ENCODE measurements at regions of chr14 and their contacts with region 1.

Region 1: DNA sequence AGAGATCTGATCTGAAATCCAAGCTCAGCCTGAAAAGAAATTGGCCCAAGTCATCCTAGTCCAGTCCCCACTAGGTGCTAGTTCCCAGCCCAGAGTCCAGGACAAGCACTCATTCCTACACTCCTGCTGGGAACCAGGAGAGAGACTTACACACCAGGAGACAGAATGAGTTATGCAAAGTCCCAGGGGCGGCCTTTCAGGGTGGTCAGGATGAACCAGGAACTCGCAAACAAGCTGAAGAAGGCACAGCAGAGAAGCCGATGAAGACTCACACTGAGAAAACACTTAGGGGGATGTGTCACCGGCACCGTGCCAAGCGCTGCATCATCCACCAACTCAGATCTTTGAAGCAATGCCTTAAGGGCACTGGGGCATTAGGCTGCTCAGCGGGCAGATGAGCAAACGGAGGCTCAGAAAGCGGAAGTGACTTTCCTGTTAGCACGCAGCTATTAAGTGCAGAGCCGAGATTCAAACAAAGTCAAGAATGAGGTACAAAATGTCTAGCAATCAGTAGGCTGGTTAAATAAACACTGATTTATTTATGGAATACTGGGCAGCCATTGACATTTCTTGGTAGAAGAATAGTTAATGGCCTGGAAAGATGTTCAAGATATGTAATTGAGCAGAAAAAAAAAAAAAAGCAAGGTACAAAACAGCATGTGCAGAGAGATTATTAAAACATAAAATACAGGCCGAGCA is 78.7 kb downstream of the LRRC74A start:
- DNase-seq: peak; percentile 84
- ATAC-seq: peak; percentile 93
- H3K4me3 ChIP-seq: no peak overlapping the region
- H3K27ac ChIP-seq: peak overlapping the region; percentile 38
- H3K4me1 ChIP-seq: peaks cover 11% of the 10 kb centered on the region
- H3K27me3 ChIP-seq: no peaks in the 10 kb centered on the region
- CTCF ChIP-seq: no peak
- EP300 ChIP-seq: no peak
- POLR2A ChIP-seq: no peak
- RAD21 ChIP-seq: no peak

Region 2: DNA sequence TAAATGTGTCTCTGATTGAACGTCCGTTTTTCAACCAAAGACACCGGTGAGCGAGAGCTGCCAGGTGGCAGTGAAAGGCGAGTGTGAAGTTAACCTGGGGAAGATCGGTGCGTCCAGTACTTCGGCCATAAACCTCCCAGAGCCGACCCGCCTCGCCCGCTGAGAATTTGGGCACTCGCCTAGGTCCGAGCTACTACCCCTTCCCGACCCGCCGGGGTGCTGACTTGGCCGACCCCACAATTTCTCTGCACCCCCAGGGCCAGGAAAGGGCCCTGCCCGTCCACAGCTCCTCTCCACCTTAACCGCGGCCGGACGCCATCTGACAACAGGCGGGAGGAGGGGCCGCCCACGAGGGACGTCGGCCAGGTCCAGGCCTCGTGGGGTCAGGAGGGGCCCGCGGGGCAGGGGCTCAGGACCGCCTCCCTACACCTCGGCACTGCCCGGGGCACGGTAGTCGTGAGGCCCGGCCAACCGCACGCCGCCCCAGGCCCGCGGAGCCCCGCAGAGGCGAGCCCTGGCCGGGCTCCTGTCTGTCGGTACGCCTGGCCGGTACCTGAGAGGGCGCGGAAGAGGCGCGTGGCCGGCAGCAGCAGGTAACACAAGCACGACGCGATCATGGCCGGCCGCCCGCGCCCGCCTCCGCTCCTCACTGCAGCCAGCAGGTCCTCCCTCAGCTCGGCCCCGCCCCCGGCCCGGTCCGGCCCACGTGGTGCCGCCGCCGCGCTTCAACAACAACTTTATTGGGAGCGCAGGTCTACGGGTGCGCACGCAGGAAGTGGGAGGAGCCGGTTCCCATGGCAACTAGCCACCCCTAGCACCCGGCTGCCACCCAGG is 92.5 kb before region 1 on chr14 and contains the start of gene ANGEL1:
- CTCF ChIA-PET with region 1: no interaction called
- POLR2A ChIA-PET with region 1: no interaction called
- RAD21 ChIA-PET with region 1: no interaction called
- SMC1A ChIA-PET with region 1: no interaction called
- in situ Hi-C with region 1: no loop called
- intact Hi-C with region 1: no loop called
- DNase-seq: peak; percentile 79
- ATAC-seq: peak; percentile 96
- H3K4me3 ChIP-seq: peak within 1 kb of the TSS; percentile 96
- H3K27ac ChIP-seq: peak within 1 kb of the TSS; percentile 23
- H3K4me1 ChIP-seq: no peaks in the 10 kb centered on the region
- H3K27me3 ChIP-seq: peaks cover 0 to 2% of the 10 kb centered on the region in 2 experiments; a peak in 1 of 4 replicates
- CTCF ChIP-seq: no peak
- EP300 ChIP-seq: no peak
- POLR2A ChIP-seq: peak; percentile 96
- RAD21 ChIP-seq: no peak
- polyA plus RNA-seq, gene ANGEL1: 1.7 to 2.8 TPM

Region 3: GRCh38 chr14:76829650-76830421 is 75.1 kb before region 1 on chr14:
- CTCF ChIA-PET with region 1: no interaction called
- POLR2A ChIA-PET with region 1: no interaction called
- RAD21 ChIA-PET with region 1: no interaction called
- SMC1A ChIA-PET with region 1: no interaction called
- in situ Hi-C with region 1: no loop called
- intact Hi-C with region 1: no loop called
- DNase-seq: no peak
- ATAC-seq: no peak
- H3K4me3 ChIP-seq: no peak overlapping the region
- H3K27ac ChIP-seq: no peak overlapping the region
- H3K4me1 ChIP-seq: no peaks in the 10 kb centered on the region
- H3K27me3 ChIP-seq: peaks cover 0 to 3% of the 10 kb centered on the region in 2 experiments; a peak in 1 of 4 replicates
- CTCF ChIP-seq: no peak
- EP300 ChIP-seq: no peak
- POLR2A ChIP-seq: no peak
- RAD21 ChIP-seq: no peak

Region 4: DNA sequence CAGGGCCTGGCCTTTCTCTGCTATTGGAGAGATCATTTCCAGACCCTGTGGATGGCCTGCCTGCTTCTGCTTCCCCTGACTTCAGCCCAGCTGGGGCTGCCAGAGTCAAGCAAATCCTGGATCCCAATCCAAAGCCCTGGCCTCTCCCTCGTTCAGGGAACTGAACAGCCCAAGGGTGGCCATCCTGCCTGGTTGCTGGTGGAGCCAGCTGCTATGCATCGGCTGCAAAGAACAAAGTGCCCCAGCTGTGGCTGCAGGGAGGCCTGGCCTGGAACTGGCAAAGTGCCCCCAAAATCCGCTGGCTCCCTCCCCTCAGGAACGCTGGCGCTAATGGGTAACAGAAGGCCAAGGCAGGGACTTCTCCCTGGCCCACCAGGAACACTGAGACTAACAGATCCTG is 22.2 kb before region 1 on chr14:
- CTCF ChIA-PET with region 1: interaction called, 77 read pairs
- POLR2A ChIA-PET with region 1: no interaction called
- RAD21 ChIA-PET with region 1: interaction called, 59 read pairs
- SMC1A ChIA-PET with region 1: interaction called, 4 read pairs
- in situ Hi-C with region 1: no loop called
- intact Hi-C with region 1: loop called (anchors 2 kb)
- DNase-seq: no peak
- ATAC-seq: no peak
- H3K4me3 ChIP-seq: no peak overlapping the region
- H3K27ac ChIP-seq: no peak overlapping the region
- H3K4me1 ChIP-seq: no peaks in the 10 kb centered on the region
- H3K27me3 ChIP-seq: peaks cover 2 to 3% of the 10 kb centered on the region in 2 experiments; a peak in 2 of 4 replicates
- CTCF ChIP-seq: no peak
- EP300 ChIP-seq: no peak
- POLR2A ChIP-seq: no peak
- RAD21 ChIP-seq: no peak

Measured in GM12878 (cell line).